Dorsolateral prefrontal cortex (tissue), 120 donors: ENCODE measurements at regions of chr18 and their contacts with region 1.

Region 1: GRCh38 chr18:13688191-13689136 is 37.9 kb downstream of the FAM210A start:
- DNase-seq: peak in 1 of 10 donors; percentile 39
- H3K4me3 ChIP-seq: no peak overlapping the region
- H3K27ac ChIP-seq: no peak overlapping the region
- H3K27me3 ChIP-seq: no peaks in the 10 kb centered on the region
- CTCF ChIP-seq: no peak

Region 2: GRCh38 chr18:13720123-13720522 is 31.7 kb after region 1 on chr18:
- intact Hi-C with region 1: loop called in 1 of 2 experiments (anchors 5 kb)
- DNase-seq: no peak
- H3K4me3 ChIP-seq: no peak overlapping the region
- H3K27ac ChIP-seq: no peak overlapping the region
- H3K27me3 ChIP-seq: no peaks in the 10 kb centered on the region
- CTCF ChIP-seq: no peak

Region 3: GRCh38 chr18:13730481-13730880 is 42.0 kb after region 1 on chr18:
- intact Hi-C with region 1: no loop called
- DNase-seq: no peak
- H3K4me3 ChIP-seq: no peak overlapping the region
- H3K27ac ChIP-seq: no peak overlapping the region
- H3K27me3 ChIP-seq: no peaks in the 10 kb centered on the region
- CTCF ChIP-seq: no peak

Region 4: GRCh38 chr18:13762690-13763439 is 74.4 kb after region 1 on chr18:
- intact Hi-C with region 1: no loop called
- DNase-seq: no peak
- H3K4me3 ChIP-seq: no peak overlapping the region
- H3K27ac ChIP-seq: no peak overlapping the region
- H3K27me3 ChIP-seq: no peaks in the 10 kb centered on the region
- CTCF ChIP-seq: no peak